CD8-positive, alpha-beta memory T cell (primary cell): ENCODE measurements at regions of chr6 and their contacts with region 1.

Region 1: GRCh38 chr6:4727671-4728435 is 48.4 kb upstream of the CDYL start:
- DNase-seq: no peak
- H3K4me3 ChIP-seq: no peak overlapping the region
- H3K4me3 Mint-ChIP-seq: peak overlapping the region in 3 of 7 donors; percentile 13 to 46 (median 32)
- H3K27ac ChIP-seq: peak overlapping the region; percentile 76
- H3K27ac Mint-ChIP-seq: peak overlapping the region in 1 of 8 donors; percentile 42
- H3K4me1 ChIP-seq: no peaks in the 10 kb centered on the region
- H3K4me1 Mint-ChIP-seq: peaks cover 11 to 17% (median 14%) of the 10 kb centered on the region in 3 donors
- H3K27me3 ChIP-seq: no peaks in the 10 kb centered on the region
- H3K27me3 Mint-ChIP-seq: peaks cover 8 to 28% of the 10 kb centered on the region in 2 donors

Region 2: GRCh38 chr6:4717124-4717523 is 10.7 kb before region 1 on chr6:
- CTCF ChIA-PET with region 1: no interaction called
- POLR2A ChIA-PET with region 1: interaction called, 12 read pairs
- DNase-seq: no peak
- H3K4me3 ChIP-seq: no peak overlapping the region
- H3K4me3 Mint-ChIP-seq: no peak overlapping the region
- H3K27ac ChIP-seq: no peak overlapping the region
- H3K27ac Mint-ChIP-seq: no peak overlapping the region
- H3K4me1 ChIP-seq: no peaks in the 10 kb centered on the region
- H3K4me1 Mint-ChIP-seq: peaks cover 4 to 9% (median 4%) of the 10 kb centered on the region in 3 donors
- H3K27me3 ChIP-seq: no peaks in the 10 kb centered on the region
- H3K27me3 Mint-ChIP-seq: peaks cover 0 to 5% of the 10 kb centered on the region in 2 donors